Activated naive CD8-positive, alpha-beta T cell treated with anti-CD3 and anti-CD28 coated beads, Interleukin-2, amount 10 ng/mL, durations not matched to agents 7 days and 5 days (primary cell): ENCODE measurements at regions of chr6 and their contacts with region 1.

Region 1: GRCh38 chr6:80004173-80005072 is at the start of gene TTK:
- DNase-seq: peak; percentile 96
- ATAC-seq: peak; percentile 96
- H3K4me3 Mint-ChIP-seq: peak within 1 kb of the TSS; percentile 99
- H3K27ac Mint-ChIP-seq: peak within 1 kb of the TSS; percentile 98
- H3K4me1 Mint-ChIP-seq: peaks cover 29% of the 10 kb centered on the region
- H3K27me3 Mint-ChIP-seq: peaks cover 4% of the 10 kb centered on the region
- total RNA-seq, gene TTK: 25.7 to 27.1 TPM

Region 2: DNA sequence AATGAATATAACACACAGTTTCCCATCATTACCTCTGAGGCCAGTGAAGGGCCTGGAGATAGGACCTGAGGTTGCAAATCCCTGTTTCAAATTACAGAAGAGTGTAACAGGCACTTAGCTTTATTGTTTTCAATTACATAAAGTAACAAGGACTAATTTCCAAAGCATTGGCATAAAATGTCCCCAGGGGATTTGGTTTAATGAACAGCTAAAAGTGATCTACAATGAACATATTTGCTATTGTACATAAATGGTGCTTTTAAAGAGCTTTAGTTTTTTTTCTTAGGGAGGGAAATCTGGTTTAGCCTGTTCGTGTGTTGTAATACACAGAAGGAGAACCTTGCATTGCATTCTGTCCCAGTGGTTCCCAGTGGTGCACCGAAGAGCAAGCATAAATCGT is 824.4 kb before region 1 on chr6:
- POLR2A ChIA-PET with region 1: no interaction called
- DNase-seq: no peak
- ATAC-seq: no peak
- H3K4me3 Mint-ChIP-seq: no peak overlapping the region
- H3K27ac Mint-ChIP-seq: no peak overlapping the region
- H3K4me1 Mint-ChIP-seq: no peaks in the 10 kb centered on the region
- H3K27me3 Mint-ChIP-seq: peaks cover 3% of the 10 kb centered on the region

Region 3: GRCh38 chr6:79947191-79948186 is 56.9 kb before region 1 on chr6 and contains the start of gene ELOVL4:
- POLR2A ChIA-PET with region 1: interaction called, 11 read pairs
- DNase-seq: peak; percentile 60
- ATAC-seq: peak; percentile 72
- H3K4me3 Mint-ChIP-seq: peak within 1 kb of the TSS; percentile 93
- H3K27ac Mint-ChIP-seq: no peak within 1 kb of the TSS
- H3K4me1 Mint-ChIP-seq: peaks cover 16% of the 10 kb centered on the region
- H3K27me3 Mint-ChIP-seq: peaks cover 28% of the 10 kb centered on the region
- total RNA-seq, gene ELOVL4: 0.78 to 0.79 TPM

Region 4: GRCh38 chr6:80106418-80107235 is 102.2 kb after region 1 on chr6 and contains the start of gene BCKDHB:
- POLR2A ChIA-PET with region 1: interaction called, 18 read pairs
- DNase-seq: peak; percentile 94
- ATAC-seq: peak; percentile 95
- H3K4me3 Mint-ChIP-seq: peak within 1 kb of the TSS; percentile 96
- H3K27ac Mint-ChIP-seq: peak within 1 kb of the TSS; percentile 94
- H3K4me1 Mint-ChIP-seq: peaks cover 13% of the 10 kb centered on the region
- H3K27me3 Mint-ChIP-seq: peaks cover 2% of the 10 kb centered on the region
- total RNA-seq, gene BCKDHB: 18.8 to 20.6 TPM

Region 5: GRCh38 chr6:80186082-80186481 is 181.7 kb after region 1 on chr6:
- POLR2A ChIA-PET with region 1: no interaction called
- DNase-seq: no peak
- ATAC-seq: no peak
- H3K4me3 Mint-ChIP-seq: no peak overlapping the region
- H3K27ac Mint-ChIP-seq: no peak overlapping the region
- H3K4me1 Mint-ChIP-seq: no peaks in the 10 kb centered on the region
- H3K27me3 Mint-ChIP-seq: no peaks in the 10 kb centered on the region

Region 6: DNA sequence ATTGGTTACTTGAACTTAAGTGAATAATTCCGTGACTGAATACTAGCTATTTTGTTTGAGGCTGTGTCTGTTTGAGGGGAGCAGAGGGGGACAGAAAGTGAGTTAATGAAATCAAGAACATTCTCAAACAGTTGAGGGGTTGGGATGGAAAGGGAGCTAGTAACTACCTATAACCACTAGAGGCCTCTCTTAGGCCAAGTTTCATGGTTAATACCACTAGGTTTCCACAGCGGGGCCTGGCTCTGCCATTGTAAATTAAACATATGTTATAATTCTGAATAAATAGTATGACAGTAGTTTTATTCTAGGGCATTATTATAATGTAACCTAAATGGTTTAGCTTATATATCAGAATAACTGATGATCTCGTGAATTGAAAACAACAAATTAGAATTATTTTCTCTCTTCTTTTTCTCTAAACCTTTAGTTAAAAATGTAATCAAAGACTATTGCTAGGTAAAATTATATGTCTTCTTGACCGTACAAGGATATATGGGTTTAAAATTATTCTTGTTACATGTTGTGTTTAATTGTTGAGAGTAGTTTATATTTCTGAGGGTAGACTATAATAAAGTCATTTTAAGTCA is 210.1 kb after region 1 on chr6:
- POLR2A ChIA-PET with region 1: no interaction called
- DNase-seq: no peak
- ATAC-seq: peak; percentile 52
- H3K4me3 Mint-ChIP-seq: no peak overlapping the region
- H3K27ac Mint-ChIP-seq: no peak overlapping the region
- H3K4me1 Mint-ChIP-seq: no peaks in the 10 kb centered on the region
- H3K27me3 Mint-ChIP-seq: no peaks in the 10 kb centered on the region